Mucosa of descending colon (tissue), 3 donors: ENCODE measurements at regions of chr20 and their contacts with region 1.

Region 1: GRCh38 chr20:37384683-37385174 is 38.8 kb downstream of the SRC start:
- DNase-seq: peak; percentile 70 to 82 (median 75)
- ATAC-seq: peak; percentile 83
- H3K4me3 ChIP-seq: no peak overlapping the region
- H3K4me1 ChIP-seq: peaks cover 13% of the 10 kb centered on the region
- CTCF ChIP-seq: peak; percentile 90

Region 2: GRCh38 chr20:36988494-36988966 is 396.2 kb before region 1 on chr20:
- intact Hi-C with region 1: no loop called
- DNase-seq: no peak
- ATAC-seq: peak; percentile 19
- H3K4me3 ChIP-seq: no peak overlapping the region
- H3K4me1 ChIP-seq: no peaks in the 10 kb centered on the region
- CTCF ChIP-seq: no peak

Region 3: GRCh38 chr20:37265152-37265551 is 119.6 kb before region 1 on chr20:
- intact Hi-C with region 1: loop called in 1 of 2 experiments (anchors 10 kb)
- DNase-seq: no peak
- ATAC-seq: peak; percentile 60
- H3K4me3 ChIP-seq: no peak overlapping the region
- H3K4me1 ChIP-seq: peaks cover 5% of the 10 kb centered on the region
- CTCF ChIP-seq: no peak

Region 4: DNA sequence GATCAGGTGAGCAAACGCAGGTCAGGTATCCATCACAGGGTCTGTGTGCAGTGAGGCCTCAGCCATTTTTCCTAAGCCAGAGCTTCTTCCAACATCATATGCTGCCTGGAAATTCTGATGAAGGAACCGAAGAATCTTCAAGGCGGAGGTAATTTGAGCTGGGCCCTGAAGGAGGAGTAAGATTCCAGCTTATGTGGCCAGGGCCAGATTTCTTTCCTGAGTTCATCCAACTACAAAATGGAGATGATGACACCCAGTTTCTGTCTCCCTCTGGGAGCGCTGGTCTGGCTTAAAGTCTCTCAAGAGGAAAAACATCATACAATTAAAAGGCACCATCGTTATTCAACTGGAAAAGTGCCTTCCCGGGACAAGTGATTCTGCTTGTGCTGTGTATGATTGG is 102.2 kb before region 1 on chr20:
- intact Hi-C with region 1: loop called in 1 of 2 experiments (anchors 5 kb)
- DNase-seq: no peak
- ATAC-seq: peak; percentile 37
- H3K4me3 ChIP-seq: no peak overlapping the region
- H3K4me1 ChIP-seq: no peaks in the 10 kb centered on the region
- CTCF ChIP-seq: no peak

Region 5: DNA sequence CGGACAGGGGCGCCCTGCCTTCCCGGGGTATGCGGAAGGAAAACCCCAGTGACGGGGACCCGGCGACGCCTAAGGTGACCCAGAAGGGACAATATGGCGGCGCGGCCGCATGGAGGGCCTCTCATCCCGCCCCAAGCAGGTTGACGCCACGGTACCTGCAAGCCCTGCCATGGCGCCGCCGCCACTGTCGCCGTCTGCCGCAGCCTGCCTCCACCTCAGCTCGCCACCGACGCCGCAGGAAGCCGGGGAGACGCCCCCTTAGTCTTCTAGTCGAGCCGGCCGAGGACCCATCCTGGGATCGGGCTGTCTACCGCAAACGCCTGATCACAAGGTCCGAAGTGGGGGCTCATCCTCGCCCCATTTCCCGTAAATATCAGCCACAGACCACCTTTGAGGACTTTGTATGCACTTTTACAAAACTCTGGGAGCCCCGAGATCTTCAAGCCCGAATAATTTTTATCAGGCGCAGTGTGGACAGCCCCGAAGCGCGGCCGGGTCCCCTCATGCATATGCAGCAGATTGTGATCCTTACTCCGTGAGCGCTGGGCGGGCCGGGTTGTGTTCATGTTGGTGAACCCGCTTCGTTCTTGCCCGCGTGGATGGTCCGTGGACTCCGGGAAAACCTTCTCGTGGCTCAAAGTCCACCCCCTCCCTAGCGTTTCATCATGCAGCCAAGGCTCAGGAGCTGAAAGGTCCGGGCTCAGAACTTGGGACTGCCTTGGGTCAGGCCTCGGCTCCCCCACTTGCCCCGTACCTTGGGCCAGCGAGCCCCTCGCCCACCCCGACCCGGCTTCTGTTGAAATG is 143.1 kb after region 1 on chr20 and contains the start of gene BLCAP:
- intact Hi-C with region 1: loop called (anchors 10 kb)
- DNase-seq: peak; percentile 93 to 94 (median 94)
- ATAC-seq: peak; percentile 87
- H3K4me3 ChIP-seq: peak within 1 kb of the TSS; percentile 64
- H3K4me1 ChIP-seq: peaks cover 33% of the 10 kb centered on the region
- CTCF ChIP-seq: no peak
- total RNA-seq, gene BLCAP: 87.9 to 110 (median 108) TPM